PC-3 (cell line): ENCODE measurements at regions of chr4 and their contacts with region 1.

Region 1: GRCh38 chr4:73836373-73837279 is at the start of gene CXCL6:
- DNase-seq: peak; percentile 45
- ATAC-seq: peak; percentile 56
- H3K4me3 ChIP-seq: peak within 1 kb of the TSS; percentile 74
- H3K27ac ChIP-seq: peak within 1 kb of the TSS; percentile 62
- H3K4me1 ChIP-seq: peaks cover 62% of the 10 kb centered on the region
- H3K27me3 ChIP-seq: no peaks in the 10 kb centered on the region
- CTCF ChIP-seq: no peak
- total RNA-seq, gene CXCL6: 23.4 and 25.7 TPM in 2 replicates

Region 2: DNA sequence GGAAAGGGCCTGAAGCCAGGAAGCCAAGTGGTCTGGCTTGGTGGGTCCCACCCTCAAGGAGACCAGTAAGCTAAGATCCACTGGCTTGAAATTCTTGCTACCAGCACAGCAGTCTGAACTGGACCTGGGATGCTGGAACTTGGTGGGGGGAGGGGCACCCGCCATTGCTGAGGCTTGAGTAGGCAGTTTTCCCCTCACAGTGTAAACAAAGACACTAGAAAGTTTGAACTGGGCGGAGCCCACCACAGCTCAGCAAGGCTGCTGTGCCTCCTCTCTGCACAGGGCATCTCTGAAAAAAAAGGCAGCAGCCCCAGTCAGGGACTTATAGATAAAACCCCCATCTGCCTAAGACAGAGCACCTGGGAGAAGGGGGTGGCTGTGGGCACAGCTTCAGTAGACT is 292.0 kb before region 1 on chr4:
- CTCF ChIA-PET with region 1: no interaction called
- POLR2A ChIA-PET with region 1: no interaction called
- intact Hi-C with region 1: no loop called
- DNase-seq: no peak
- ATAC-seq: no peak
- H3K4me3 ChIP-seq: no peak overlapping the region
- H3K27ac ChIP-seq: no peak overlapping the region
- H3K4me1 ChIP-seq: no peaks in the 10 kb centered on the region
- H3K27me3 ChIP-seq: no peaks in the 10 kb centered on the region
- CTCF ChIP-seq: no peak

Region 3: DNA sequence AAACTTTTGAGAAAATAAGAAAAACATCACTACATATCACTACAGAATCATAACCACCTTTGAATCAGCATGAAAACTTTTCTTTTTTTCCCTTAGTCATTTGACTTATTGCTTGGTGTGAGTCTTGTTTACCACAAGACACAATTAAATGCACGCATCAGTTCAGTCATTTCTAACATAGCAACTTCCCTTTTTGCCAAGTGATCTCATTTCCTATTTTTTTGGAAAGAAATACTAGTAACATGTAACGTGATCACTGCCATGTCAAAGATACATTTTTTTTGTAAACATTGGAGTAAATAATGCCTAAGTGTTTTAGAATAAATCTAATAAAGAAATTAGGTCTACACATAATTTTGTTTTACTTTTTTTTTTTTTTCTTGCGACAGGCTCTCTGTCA is 101.4 kb before region 1 on chr4:
- CTCF ChIA-PET with region 1: no interaction called
- POLR2A ChIA-PET with region 1: interaction called, 11 read pairs
- intact Hi-C with region 1: no loop called
- DNase-seq: peak; percentile 86
- ATAC-seq: peak; percentile 56
- H3K4me3 ChIP-seq: no peak overlapping the region
- H3K27ac ChIP-seq: peak overlapping the region; percentile 79
- H3K4me1 ChIP-seq: peaks cover 51% of the 10 kb centered on the region
- H3K27me3 ChIP-seq: no peaks in the 10 kb centered on the region
- CTCF ChIP-seq: no peak